MCF 10A (cell line): ENCODE measurements at regions of chrX and their contacts with region 1.

Region 1: DNA sequence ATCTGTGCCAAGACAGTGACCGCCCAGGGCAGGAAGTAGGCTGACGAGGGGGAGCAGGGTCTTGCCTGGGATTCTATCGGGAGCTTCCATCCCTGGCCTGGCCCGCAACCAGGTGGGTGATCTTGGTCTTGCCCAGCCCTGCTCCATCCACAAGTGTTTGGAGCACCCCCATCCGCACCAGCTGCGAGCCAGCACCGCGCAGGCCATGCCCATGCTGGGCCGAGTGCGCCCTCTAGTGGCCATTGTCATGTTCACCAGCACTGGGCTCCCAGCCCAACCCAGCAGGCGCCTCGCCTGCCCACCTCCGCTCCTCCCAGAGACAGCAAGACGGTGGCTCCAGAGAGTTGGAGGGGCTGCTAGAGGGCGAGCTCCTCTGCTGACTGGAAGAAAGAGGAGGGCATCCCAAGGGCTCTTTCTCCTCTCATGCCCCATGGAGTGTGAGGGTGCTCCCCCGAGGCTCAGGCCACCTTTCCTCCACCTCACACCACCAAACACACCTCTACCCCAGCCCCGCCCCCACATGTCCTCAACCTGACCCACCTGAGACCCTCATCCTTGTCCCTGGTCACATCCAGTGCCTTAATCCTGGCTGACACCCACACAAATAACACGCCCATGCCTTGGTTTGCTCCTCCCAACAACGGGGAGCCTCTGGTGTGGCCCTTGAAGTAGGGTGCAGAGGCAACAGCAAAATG is 9.8 kb upstream of the ATP2B3 start:
- DNase-seq: peak; percentile 68
- H3K4me3 Mint-ChIP-seq: no peak overlapping the region
- H3K27ac Mint-ChIP-seq: no peak overlapping the region
- H3K4me1 Mint-ChIP-seq: no peaks in the 10 kb centered on the region
- H3K27me3 Mint-ChIP-seq: no peaks in the 10 kb centered on the region
- CTCF ChIP-seq: peak; percentile 77

Region 2: GRCh38 chrX:153032397-153033118 is 475.1 kb before region 1 on chrX:
- CTCF ChIA-PET with region 1: interaction called, 8 read pairs
- POLR2A ChIA-PET with region 1: no interaction called
- intact Hi-C with region 1: loop called (anchors 2 kb)
- DNase-seq: peak; percentile 43
- H3K4me3 Mint-ChIP-seq: no peak overlapping the region
- H3K27ac Mint-ChIP-seq: no peak overlapping the region
- H3K4me1 Mint-ChIP-seq: no peaks in the 10 kb centered on the region
- H3K27me3 Mint-ChIP-seq: no peaks in the 10 kb centered on the region
- CTCF ChIP-seq: peak; percentile 63

Region 3: GRCh38 chrX:153470435-153471363 is 36.9 kb before region 1 on chrX and contains the start of gene HAUS7:
- CTCF ChIA-PET with region 1: interaction called, 13 read pairs
- POLR2A ChIA-PET with region 1: no interaction called
- intact Hi-C with region 1: no loop called
- DNase-seq: peak; percentile 83
- H3K4me3 Mint-ChIP-seq: peak within 1 kb of the TSS; percentile 75
- H3K27ac Mint-ChIP-seq: peak within 1 kb of the TSS; percentile 35
- H3K4me1 Mint-ChIP-seq: no peaks in the 10 kb centered on the region
- H3K27me3 Mint-ChIP-seq: no peaks in the 10 kb centered on the region
- CTCF ChIP-seq: peak; percentile 66
- total RNA-seq, gene HAUS7: 13.0 and 19.4 TPM in 2 replicates

Region 4: DNA sequence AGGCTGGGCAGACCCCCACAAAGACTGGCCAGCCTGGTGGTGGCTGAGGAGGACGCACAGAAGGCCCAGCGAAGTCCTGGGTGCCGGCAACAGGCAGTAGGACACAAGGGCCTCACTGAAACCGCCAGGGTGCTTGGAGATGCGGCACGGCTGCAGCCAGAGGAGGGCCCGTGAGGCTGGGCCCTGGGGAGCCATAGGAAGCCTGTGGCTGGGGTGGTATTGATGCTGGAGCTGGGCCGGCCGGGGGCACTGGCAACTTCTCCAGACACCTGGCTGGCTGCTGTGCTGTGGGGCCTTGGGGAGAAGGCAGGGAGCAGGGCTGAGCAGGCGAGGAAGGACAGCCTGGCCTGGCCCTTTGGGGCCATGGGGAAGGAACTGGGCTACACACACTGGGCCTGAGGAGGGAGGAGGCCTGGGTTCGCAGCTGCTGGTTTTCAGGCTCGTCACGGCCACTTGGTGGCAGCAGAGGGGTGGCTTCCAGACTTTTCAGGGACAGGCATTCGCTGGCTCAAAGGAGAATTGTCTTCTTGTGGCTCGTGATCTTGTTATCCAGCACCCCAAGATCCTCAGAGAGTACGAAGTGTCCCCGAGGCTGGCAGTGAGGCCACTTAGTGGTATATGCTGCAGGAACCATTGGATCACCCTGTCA is 47.0 kb after region 1 on chrX:
- CTCF ChIA-PET with region 1: no interaction called
- POLR2A ChIA-PET with region 1: no interaction called
- intact Hi-C with region 1: no loop called
- DNase-seq: peak; percentile 61
- H3K4me3 Mint-ChIP-seq: no peak overlapping the region
- H3K27ac Mint-ChIP-seq: no peak overlapping the region
- H3K4me1 Mint-ChIP-seq: no peaks in the 10 kb centered on the region
- H3K27me3 Mint-ChIP-seq: no peaks in the 10 kb centered on the region
- CTCF ChIP-seq: peak; percentile 53